ENCODE measurements at regions of chr5 and their contacts with region 1.

Region 1: DNA sequence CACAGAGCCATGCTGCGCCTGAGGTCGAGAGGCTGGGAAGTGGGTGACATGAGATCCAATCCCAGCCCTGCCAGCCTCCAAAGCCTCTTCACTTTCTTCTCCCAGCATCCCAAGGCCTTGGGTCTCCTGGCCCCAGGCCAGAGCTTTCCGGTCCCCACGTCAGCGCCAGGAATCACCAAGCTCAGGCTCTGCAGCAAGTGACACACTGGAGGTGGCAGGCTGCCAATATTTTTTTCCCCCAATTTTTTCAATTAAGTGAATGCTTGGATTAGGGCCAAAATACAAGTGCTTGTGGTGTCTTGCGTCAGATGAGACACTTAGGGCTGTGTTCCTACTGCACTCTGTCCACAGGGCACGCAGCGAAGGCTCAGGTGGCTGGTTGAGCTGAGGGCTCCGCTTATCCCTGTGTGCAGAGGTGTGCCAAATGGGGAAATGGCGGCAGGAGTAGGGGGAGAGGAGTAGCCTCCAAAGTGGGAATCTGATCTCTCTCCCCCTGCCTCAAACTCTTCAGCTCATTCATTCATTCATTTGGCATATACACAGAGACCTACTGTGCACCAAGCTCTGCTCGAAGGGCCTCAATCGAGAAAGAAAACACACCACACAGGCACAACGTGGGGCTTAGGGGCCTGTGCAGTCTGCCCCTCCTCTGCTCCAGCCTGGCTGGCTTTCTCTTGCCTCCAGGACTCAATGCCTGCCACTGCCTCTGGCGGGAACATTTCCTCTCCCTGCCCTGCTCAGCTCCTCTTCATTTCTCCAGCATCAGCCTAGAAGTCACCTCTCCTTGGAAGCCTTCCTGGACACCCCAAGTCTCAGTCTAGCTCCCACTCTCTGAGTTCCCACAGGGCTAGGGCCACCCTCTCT is 16.6 kb downstream of the SH3PXD2B start:
- DNase-seq: no peak
- H3K4me3 Mint-ChIP-seq: no peak overlapping the region
- H3K27ac Mint-ChIP-seq: no peak overlapping the region
- H3K4me1 Mint-ChIP-seq: peaks cover 2% of the 10 kb centered on the region
- H3K27me3 Mint-ChIP-seq: peaks cover 5% of the 10 kb centered on the region

Region 2: DNA sequence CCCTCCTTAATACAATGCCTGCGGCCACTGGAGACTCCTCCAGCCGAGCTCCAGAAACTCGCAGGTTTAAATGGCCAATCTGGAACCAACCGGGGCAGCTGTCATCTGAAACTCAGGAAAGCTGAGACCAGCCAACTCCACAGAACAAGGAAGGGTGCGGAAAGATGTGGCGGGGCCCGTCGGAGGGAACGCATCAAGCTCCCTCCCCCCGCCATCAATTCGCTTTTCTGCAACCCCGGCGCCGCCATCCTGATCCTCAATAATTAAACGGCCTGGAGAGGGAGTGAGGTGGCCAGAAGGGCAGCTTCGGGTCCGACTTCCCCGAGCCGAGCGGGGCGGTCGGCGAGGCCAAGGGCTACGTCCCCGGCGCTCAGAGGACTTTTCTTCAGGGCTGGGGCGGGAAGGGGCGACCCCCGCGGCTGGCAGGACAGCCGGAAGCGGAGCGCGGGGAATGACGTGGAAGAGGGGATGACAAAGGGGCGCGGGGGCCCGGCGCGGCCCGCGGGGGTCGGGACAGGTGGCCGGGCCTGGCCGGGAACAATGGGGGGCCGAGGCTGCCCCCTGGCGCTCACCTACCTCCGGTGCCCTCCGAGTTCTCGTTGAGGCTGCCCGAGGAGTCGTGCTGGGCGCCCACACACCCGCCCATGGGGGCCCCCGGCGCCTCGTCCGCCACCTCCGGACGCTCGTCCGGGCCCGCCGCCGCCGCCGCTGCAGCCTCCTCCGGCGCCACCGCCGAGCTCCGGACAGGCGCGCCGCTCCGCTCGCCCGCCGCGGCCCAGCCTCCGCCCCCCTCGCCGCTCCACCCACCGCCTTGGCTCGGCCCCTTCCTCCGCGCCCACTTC is 154.4 kb before region 1 on chr5 and contains the start of gene UBTD2:
- CTCF ChIA-PET with region 1: no interaction called
- POLR2A ChIA-PET with region 1: no interaction called
- DNase-seq: peak; percentile 79
- H3K4me3 Mint-ChIP-seq: peak within 1 kb of the TSS; percentile 84
- H3K27ac Mint-ChIP-seq: peak within 1 kb of the TSS; percentile 35
- H3K4me1 Mint-ChIP-seq: peaks cover 23% of the 10 kb centered on the region
- H3K27me3 Mint-ChIP-seq: peaks cover 11% of the 10 kb centered on the region
- total RNA-seq, gene UBTD2: 10.2 to 10.6 TPM

Region 3: DNA sequence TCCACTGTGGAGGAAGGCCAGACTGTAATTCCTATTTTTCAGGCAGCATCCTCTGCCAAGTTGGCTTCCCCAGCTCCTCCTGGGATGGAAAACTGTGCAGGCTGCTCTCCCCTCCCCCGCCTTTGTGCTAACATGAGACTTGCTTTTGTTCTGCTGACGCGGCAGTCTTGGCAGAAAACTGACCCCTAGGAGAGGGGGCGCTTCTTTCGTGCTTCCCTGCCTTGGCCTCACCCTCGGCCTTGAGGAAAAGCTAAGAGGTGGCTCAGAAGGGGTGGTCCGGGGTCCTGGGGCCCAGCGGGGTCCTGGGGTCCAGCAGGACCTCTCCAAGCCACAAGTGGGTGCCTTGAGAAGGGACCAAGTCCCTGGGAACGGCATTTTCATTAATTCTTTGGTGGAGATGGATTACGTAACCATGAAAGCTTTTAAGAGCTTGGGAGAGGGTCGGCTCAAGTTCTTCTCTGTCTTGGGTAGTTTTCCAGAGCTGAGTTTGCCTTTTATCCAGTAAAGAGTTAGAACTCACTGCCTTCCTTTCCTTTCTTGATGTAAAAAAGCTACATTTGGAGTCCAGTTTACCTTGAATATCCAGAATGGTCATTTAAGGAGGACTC is 34.4 kb before region 1 on chr5:
- CTCF ChIA-PET with region 1: no interaction called
- POLR2A ChIA-PET with region 1: no interaction called
- DNase-seq: no peak
- H3K4me3 Mint-ChIP-seq: no peak overlapping the region
- H3K27ac Mint-ChIP-seq: no peak overlapping the region
- H3K4me1 Mint-ChIP-seq: no peaks in the 10 kb centered on the region
- H3K27me3 Mint-ChIP-seq: peaks cover 37% of the 10 kb centered on the region

Region 4: DNA sequence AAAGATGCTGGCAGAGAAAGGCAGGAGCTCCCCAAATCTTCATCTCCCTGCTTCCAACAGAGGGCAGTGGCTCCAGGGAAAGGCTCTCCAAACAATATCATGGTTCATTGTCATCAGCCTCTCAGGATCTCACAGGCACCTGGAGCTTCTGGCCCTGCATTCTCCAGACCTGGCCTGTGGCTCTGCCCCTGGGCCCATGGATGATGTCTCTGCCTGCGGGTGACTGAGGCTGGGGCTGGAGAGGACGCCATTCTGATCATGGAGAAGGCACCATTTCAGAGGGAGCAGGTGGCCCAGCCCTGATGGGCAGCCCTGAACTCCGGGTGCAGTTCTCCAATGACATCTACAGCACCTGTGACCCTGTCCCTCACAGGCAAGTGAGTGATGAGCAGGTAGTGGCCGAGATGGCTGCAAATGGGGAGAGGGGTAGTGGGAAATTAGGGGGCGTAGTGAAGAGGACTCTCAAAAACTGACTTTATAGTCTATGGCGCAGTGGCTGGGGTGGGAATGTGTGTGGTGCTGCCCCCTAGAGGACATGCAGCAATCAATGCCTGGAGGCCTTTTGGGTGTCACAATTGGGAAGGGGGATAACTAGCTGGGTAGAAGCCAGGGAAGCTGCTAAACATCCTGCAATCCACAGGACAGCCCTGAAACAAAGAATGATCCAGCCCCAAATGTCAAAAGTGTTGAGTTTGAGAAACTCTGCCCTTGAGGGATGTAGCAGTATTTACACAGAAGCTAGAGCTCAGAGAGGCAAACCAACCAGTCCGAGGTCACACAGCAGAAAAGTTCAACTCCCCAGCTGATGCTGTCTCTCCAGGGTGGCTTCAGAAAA is 13.4 kb after region 1 on chr5:
- CTCF ChIA-PET with region 1: interaction called, 12 read pairs
- POLR2A ChIA-PET with region 1: no interaction called
- DNase-seq: peak; percentile 53
- H3K4me3 Mint-ChIP-seq: no peak overlapping the region
- H3K27ac Mint-ChIP-seq: no peak overlapping the region
- H3K4me1 Mint-ChIP-seq: peaks cover 13% of the 10 kb centered on the region
- H3K27me3 Mint-ChIP-seq: peaks cover 54% of the 10 kb centered on the region

Measured in activated CD4-positive, alpha-beta memory T cell treated with anti-CD3 and anti-CD28 coated beads, Interleukin-2, amount 10 ng/mL, durations not matched to agents 7 days and 5 days (primary cell).